MCF 10A (cell line): ENCODE measurements at regions of chr11 and their contacts with region 1.

Region 1: GRCh38 chr11:44565211-44565952 is at the start of gene CD82:
- DNase-seq: peak; percentile 99
- H3K4me3 Mint-ChIP-seq: peak within 1 kb of the TSS; percentile 77
- H3K27ac Mint-ChIP-seq: peak within 1 kb of the TSS; percentile 98
- H3K4me1 Mint-ChIP-seq: peaks cover 64% of the 10 kb centered on the region
- H3K27me3 Mint-ChIP-seq: no peaks in the 10 kb centered on the region
- CTCF ChIP-seq: peak; percentile 20
- total RNA-seq, gene CD82: 50.9 and 114 TPM in 2 replicates

Region 2: DNA sequence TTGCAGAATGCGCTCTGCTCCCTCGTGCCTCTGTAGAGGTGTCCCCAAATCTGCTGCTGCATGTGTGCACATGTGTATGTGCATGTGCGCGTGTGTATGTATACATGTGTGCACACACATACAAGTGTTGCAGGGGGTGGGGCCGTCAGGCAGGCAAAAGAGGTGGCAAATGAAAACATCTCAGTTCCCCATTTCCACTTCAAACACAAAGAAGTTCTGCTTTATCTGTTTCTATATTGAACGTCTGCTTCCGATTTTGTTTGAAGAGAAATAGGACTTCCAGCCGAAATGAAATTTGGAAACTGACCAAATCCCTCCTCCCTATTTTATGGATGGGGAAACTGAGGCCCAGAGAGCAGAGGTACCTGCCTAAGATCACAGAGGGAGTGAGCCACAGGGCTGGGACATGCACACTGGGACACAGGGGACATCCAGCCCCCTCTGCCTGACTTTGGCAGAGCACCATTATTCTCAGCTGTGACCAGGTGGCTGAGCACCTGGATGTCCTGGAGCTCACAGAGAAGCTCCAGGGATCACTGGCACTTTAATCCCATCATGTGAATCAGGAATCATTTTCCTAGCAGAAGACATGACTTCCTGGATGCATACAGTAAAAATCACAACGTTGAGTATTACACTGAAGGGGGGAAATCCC is 214.2 kb before region 1 on chr11:
- CTCF ChIA-PET with region 1: no interaction called
- POLR2A ChIA-PET with region 1: no interaction called
- intact Hi-C with region 1: no loop called
- DNase-seq: no peak
- H3K4me3 Mint-ChIP-seq: no peak overlapping the region
- H3K27ac Mint-ChIP-seq: no peak overlapping the region
- H3K4me1 Mint-ChIP-seq: no peaks in the 10 kb centered on the region
- H3K27me3 Mint-ChIP-seq: no peaks in the 10 kb centered on the region
- CTCF ChIP-seq: no peak

Region 3: GRCh38 chr11:44911029-44911814 is 345.8 kb after region 1 on chr11:
- CTCF ChIA-PET with region 1: interaction called, 57 read pairs
- POLR2A ChIA-PET with region 1: interaction called, 7 read pairs
- intact Hi-C with region 1: no loop called
- DNase-seq: peak; percentile 82
- H3K4me3 Mint-ChIP-seq: no peak overlapping the region
- H3K27ac Mint-ChIP-seq: no peak overlapping the region
- H3K4me1 Mint-ChIP-seq: no peaks in the 10 kb centered on the region
- H3K27me3 Mint-ChIP-seq: no peaks in the 10 kb centered on the region
- CTCF ChIP-seq: peak; percentile 79